ENCODE measurements at regions of chr4 and their contacts with region 1.

Region 1: GRCh38 chr4:95510145-95510544 is 38.6 kb downstream of the UNC5C start:
- DNase-seq: no peak
- H3K4me3 ChIP-seq: no peak overlapping the region
- H3K27ac ChIP-seq: no peak overlapping the region
- H3K4me1 ChIP-seq: no peaks in the 10 kb centered on the region
- H3K27me3 ChIP-seq: no peaks in the 10 kb centered on the region
- CTCF ChIP-seq: peak in 2 of 3 experiments; percentile 29 to 43; a peak in 2 of 4 replicates
- EP300 ChIP-seq: no peak
- POLR2A ChIP-seq: no peak
- RAD21 ChIP-seq: peak; percentile 58 to 64

Region 2: GRCh38 chr4:95499291-95499696 is 10.9 kb before region 1 on chr4:
- CTCF ChIA-PET with region 1: interaction called, 10 read pairs
- POLR2A ChIA-PET with region 1: no interaction called
- DNase-seq: no peak
- H3K4me3 ChIP-seq: no peak overlapping the region
- H3K27ac ChIP-seq: no peak overlapping the region
- H3K4me1 ChIP-seq: no peaks in the 10 kb centered on the region
- H3K27me3 ChIP-seq: no peaks in the 10 kb centered on the region
- CTCF ChIP-seq: no peak
- EP300 ChIP-seq: no peak
- POLR2A ChIP-seq: no peak
- RAD21 ChIP-seq: no peak

Region 3: GRCh38 chr4:95522682-95523530 is 12.8 kb after region 1 on chr4:
- CTCF ChIA-PET with region 1: interaction called, 18 read pairs
- POLR2A ChIA-PET with region 1: no interaction called
- DNase-seq: no peak
- H3K4me3 ChIP-seq: no peak overlapping the region
- H3K27ac ChIP-seq: no peak overlapping the region
- H3K4me1 ChIP-seq: no peaks in the 10 kb centered on the region
- H3K27me3 ChIP-seq: no peaks in the 10 kb centered on the region
- CTCF ChIP-seq: no peak
- EP300 ChIP-seq: no peak
- POLR2A ChIP-seq: no peak
- RAD21 ChIP-seq: no peak

Region 4: GRCh38 chr4:95606739-95607138 is 96.6 kb after region 1 on chr4:
- CTCF ChIA-PET with region 1: no interaction called
- POLR2A ChIA-PET with region 1: no interaction called
- DNase-seq: no peak
- H3K4me3 ChIP-seq: no peak overlapping the region
- H3K27ac ChIP-seq: no peak overlapping the region
- H3K4me1 ChIP-seq: no peaks in the 10 kb centered on the region; a peak in 1 of 7 replicates
- H3K27me3 ChIP-seq: no peaks in the 10 kb centered on the region
- CTCF ChIP-seq: no peak
- EP300 ChIP-seq: no peak
- POLR2A ChIP-seq: no peak
- RAD21 ChIP-seq: no peak

Region 5: DNA sequence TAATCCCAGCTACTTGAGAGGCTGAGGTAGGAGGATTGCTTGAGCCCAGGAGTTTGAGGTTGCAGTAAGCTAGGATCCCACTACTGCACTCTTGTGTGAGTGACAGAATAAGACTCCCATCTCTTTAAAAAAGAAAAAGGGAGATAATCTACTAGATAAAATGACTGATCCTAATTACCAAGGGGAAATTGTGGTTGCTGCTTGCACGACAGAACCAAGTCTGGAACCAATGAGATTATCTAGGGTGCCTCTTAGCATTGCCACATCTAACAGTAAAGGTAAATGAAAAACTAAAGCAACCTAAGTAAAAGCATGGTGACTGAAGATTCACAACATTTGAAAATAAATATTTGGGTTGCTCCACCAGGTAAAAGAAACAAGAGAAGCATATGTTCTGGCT is 514.9 kb after region 1 on chr4:
- CTCF ChIA-PET with region 1: no interaction called
- POLR2A ChIA-PET with region 1: no interaction called
- DNase-seq: no peak
- H3K4me3 ChIP-seq: no peak overlapping the region
- H3K27ac ChIP-seq: no peak overlapping the region
- H3K4me1 ChIP-seq: no peaks in the 10 kb centered on the region
- H3K27me3 ChIP-seq: no peaks in the 10 kb centered on the region
- CTCF ChIP-seq: no peak
- EP300 ChIP-seq: no peak
- POLR2A ChIP-seq: no peak
- RAD21 ChIP-seq: no peak

Region 6: DNA sequence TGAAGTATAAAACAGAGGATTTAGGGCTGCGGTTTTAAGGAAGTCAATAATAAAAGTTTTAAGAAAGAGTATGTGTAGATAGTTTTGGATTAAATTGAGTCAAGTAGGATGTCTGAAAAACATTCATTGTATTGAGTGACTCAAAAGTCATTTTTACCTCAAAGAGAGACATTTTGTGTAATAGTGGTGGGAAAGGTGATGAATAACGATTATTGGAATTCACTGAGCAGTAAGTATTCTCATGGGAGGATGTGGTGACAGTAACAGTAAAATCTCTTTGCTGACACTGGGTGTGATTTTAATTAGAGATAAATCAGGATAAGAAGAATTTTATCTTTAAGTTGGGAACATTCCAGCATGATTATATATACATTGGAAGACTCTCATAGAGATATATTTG is 563.3 kb after region 1 on chr4:
- CTCF ChIA-PET with region 1: no interaction called
- POLR2A ChIA-PET with region 1: no interaction called
- DNase-seq: no peak
- H3K4me3 ChIP-seq: no peak overlapping the region
- H3K27ac ChIP-seq: no peak overlapping the region
- H3K4me1 ChIP-seq: no peaks in the 10 kb centered on the region
- H3K27me3 ChIP-seq: no peaks in the 10 kb centered on the region
- CTCF ChIP-seq: no peak
- EP300 ChIP-seq: no peak
- POLR2A ChIP-seq: no peak
- RAD21 ChIP-seq: no peak

Measured in H1 (cell line).